ENCODE measurements at regions of chr6 and their contacts with region 1.

Region 1: GRCh38 chr6:99868074-99868702 is 125.8 kb downstream of the MCHR2 start:
- DNase-seq: peak; percentile 2
- ATAC-seq: peak; percentile 90
- H3K4me3 ChIP-seq: no peak overlapping the region
- H3K27ac ChIP-seq: no peak overlapping the region
- H3K4me1 ChIP-seq: no peaks in the 10 kb centered on the region
- H3K27me3 ChIP-seq: no peaks in the 10 kb centered on the region; a peak in 2 of 4 replicates
- CTCF ChIP-seq: peak; percentile 67 to 85 (median 75); a peak in 5 of 6 replicates
- EP300 ChIP-seq: no peak
- POLR2A ChIP-seq: no peak
- RAD21 ChIP-seq: peak; percentile 71

Region 2: DNA sequence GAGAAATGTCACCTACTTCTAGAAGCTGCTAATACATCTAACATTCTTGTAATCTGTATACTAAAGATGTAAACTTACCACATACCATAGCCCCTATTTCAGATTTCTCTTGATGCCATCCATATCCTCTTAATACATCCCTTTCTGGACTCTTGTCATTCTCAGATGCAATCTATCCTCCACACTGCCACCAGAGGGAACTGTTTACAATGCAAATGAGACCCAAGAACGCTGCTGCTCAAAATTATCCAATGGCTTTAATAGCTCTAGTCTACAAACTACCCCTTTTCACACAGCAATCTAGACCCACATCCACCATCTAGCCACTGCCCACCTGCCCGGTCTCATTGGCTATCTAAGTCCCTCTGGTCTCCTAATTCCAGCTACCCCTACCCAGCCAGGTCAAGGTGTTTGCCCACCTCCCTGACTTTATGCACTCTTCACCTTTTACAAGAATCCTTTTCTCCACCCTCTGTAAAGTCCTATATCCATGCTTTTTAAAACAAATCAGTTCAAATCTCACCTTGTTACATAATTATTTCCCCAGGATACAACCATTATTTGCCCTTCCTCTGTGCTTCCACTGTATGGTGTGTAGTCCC is 533.6 kb before region 1 on chr6:
- CTCF ChIA-PET with region 1: no interaction called
- POLR2A ChIA-PET with region 1: no interaction called
- RAD21 ChIA-PET with region 1: no interaction called
- SMC1A ChIA-PET with region 1: no interaction called
- in situ Hi-C with region 1: no loop called
- intact Hi-C with region 1: no loop called
- DNase-seq: peak; percentile 21
- ATAC-seq: peak; percentile 65
- H3K4me3 ChIP-seq: no peak overlapping the region
- H3K27ac ChIP-seq: no peak overlapping the region
- H3K4me1 ChIP-seq: peaks cover 16% of the 10 kb centered on the region
- H3K27me3 ChIP-seq: no peaks in the 10 kb centered on the region; a peak in 1 of 4 replicates
- CTCF ChIP-seq: peak; percentile 67 to 74 (median 69)
- EP300 ChIP-seq: no peak
- POLR2A ChIP-seq: no peak
- RAD21 ChIP-seq: peak; percentile 80

Region 3: GRCh38 chr6:99761711-99762110 is 106.5 kb before region 1 on chr6:
- CTCF ChIA-PET with region 1: no interaction called
- POLR2A ChIA-PET with region 1: no interaction called
- RAD21 ChIA-PET with region 1: no interaction called
- SMC1A ChIA-PET with region 1: no interaction called
- in situ Hi-C with region 1: no loop called
- intact Hi-C with region 1: no loop called
- DNase-seq: no peak
- ATAC-seq: no peak
- H3K4me3 ChIP-seq: no peak overlapping the region
- H3K27ac ChIP-seq: no peak overlapping the region
- H3K4me1 ChIP-seq: no peaks in the 10 kb centered on the region
- H3K27me3 ChIP-seq: no peaks in the 10 kb centered on the region
- CTCF ChIP-seq: no peak
- EP300 ChIP-seq: no peak
- POLR2A ChIP-seq: no peak
- RAD21 ChIP-seq: no peak

Region 4: DNA sequence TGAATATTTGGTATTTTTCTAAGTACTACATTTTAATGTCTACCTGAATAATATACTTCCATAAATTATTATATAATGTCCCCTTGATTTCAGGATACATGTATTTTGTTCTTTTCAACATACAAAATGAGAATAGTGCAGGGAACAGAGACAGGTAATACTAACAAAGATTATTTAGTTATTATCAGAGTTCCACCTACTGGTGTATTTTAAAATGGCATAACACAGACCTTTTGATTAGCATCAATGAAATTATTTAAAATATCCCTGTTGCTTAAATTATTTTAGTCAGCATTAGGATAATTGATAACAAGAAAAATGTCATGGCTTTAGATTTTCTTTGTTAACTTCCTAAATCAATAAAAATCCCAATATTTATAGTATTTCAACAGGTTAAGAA is 77.5 kb before region 1 on chr6:
- CTCF ChIA-PET with region 1: no interaction called
- POLR2A ChIA-PET with region 1: no interaction called
- RAD21 ChIA-PET with region 1: no interaction called
- SMC1A ChIA-PET with region 1: no interaction called
- in situ Hi-C with region 1: no loop called
- intact Hi-C with region 1: no loop called
- DNase-seq: no peak
- ATAC-seq: 0 out of 3 replicates have a peak, but pooled peaks have one; percentile 39
- H3K4me3 ChIP-seq: no peak overlapping the region
- H3K27ac ChIP-seq: no peak overlapping the region
- H3K4me1 ChIP-seq: no peaks in the 10 kb centered on the region
- H3K27me3 ChIP-seq: peaks cover 0 to 3% of the 10 kb centered on the region in 2 experiments; a peak in 1 of 4 replicates
- CTCF ChIP-seq: no peak; a peak in 1 of 6 replicates
- EP300 ChIP-seq: no peak
- POLR2A ChIP-seq: no peak
- RAD21 ChIP-seq: no peak

Region 5: DNA sequence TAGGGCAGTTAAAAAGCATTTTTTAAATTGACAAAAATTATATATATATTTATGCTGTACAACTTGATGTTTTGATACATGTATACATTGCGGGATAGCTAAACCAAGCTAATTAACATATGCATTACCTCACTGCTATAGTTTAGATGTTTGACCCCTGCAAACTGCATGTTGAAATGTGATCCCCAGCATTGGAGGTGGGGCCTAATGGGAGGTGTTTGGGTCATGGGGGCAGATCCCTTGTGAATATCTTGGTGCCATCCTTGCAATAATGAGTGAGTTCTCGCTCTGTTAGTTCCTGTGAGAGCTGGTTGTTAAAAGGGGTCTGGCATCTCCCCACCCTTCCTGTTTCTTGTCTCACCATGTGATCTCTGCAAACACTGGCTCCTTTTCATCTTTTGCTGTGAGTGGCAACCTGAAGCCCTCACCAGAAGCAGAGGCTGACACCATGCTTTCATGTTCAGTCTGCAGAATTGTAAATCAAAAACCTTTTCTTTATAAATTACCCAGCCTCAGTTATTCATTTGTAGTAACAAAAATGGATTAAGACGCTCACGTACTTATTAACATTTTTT is 14.0 kb after region 1 on chr6:
- CTCF ChIA-PET with region 1: interaction called, 40 read pairs
- POLR2A ChIA-PET with region 1: no interaction called
- RAD21 ChIA-PET with region 1: interaction called, 5 read pairs
- SMC1A ChIA-PET with region 1: no interaction called
- in situ Hi-C with region 1: no loop called
- intact Hi-C with region 1: no loop called
- DNase-seq: no peak
- ATAC-seq: no peak
- H3K4me3 ChIP-seq: no peak overlapping the region
- H3K27ac ChIP-seq: no peak overlapping the region
- H3K4me1 ChIP-seq: no peaks in the 10 kb centered on the region
- H3K27me3 ChIP-seq: no peaks in the 10 kb centered on the region; a peak in 1 of 4 replicates
- CTCF ChIP-seq: no peak
- EP300 ChIP-seq: no peak
- POLR2A ChIP-seq: no peak
- RAD21 ChIP-seq: no peak

Region 6: DNA sequence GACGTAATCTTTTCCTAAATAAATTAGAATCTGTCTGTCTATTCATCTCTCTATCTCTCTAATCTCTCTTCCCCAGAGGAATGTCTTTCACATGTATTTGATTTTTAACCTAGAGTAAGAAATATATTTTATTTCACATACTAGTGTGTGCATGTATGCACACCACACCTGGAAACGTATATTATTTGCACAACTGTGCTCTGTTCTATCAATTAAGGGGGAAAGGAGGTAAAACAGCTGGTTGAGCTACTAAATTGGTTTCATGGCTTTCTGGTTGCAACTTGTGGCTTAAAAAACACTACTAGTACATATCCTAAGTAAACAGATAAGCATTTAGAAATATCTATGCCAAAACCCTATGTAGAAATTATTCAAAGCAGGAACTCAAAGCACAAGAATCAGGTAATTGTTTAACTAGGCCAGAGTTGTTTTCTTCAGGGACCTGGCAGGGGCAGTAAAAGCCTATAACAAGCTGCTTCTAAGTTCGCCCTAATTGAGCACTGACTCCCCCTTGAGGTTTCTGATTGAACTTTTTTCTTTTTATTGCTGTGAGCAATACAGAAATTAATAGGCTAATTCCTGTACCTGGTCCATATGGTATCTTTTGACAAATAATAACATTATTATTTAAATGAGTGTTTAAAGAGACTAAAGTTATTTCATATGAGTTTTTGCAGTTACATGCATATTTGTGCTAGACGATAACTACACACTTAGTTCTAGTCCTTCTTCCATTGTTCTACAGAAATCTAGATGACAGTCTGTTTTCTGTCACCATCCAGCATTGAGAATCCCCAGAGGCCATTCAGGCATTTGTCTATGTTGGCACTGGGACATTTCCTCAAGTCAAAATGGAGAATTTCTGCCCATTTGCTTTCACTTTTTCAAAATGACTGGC is 37.3 kb after region 1 on chr6:
- CTCF ChIA-PET with region 1: interaction called, 41 read pairs
- POLR2A ChIA-PET with region 1: no interaction called
- RAD21 ChIA-PET with region 1: interaction called, 5 read pairs
- SMC1A ChIA-PET with region 1: interaction called, 10 read pairs
- in situ Hi-C with region 1: no loop called
- intact Hi-C with region 1: loop called (anchors 1 kb)
- DNase-seq: no peak
- ATAC-seq: peak; percentile 92
- H3K4me3 ChIP-seq: no peak overlapping the region
- H3K27ac ChIP-seq: no peak overlapping the region
- H3K4me1 ChIP-seq: no peaks in the 10 kb centered on the region
- H3K27me3 ChIP-seq: no peaks in the 10 kb centered on the region; a peak in 1 of 4 replicates
- CTCF ChIP-seq: peak; percentile 49 to 65 (median 53); a peak in 5 of 6 replicates
- EP300 ChIP-seq: no peak
- POLR2A ChIP-seq: no peak
- RAD21 ChIP-seq: peak; percentile 50

Region 7: DNA sequence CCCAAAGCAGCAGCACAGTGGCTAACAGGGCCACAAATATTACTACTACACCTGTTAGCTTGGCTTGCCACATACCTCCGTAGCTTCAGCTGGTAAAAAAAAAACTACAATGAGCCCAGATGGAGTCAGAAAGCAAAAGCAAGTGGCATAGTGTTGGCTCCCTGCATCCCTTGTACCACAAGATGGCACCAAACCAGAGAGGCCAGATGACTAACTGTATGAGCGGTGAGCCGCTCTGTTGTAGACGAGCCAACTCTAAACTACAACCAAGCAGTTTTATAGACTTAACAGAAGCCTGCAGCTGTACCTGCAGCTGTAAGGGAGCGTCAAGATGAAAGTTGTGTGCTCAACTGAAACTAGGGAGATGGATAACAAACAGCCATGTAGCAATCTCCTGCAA is 210.3 kb after region 1 on chr6:
- CTCF ChIA-PET with region 1: interaction called, 12 read pairs
- POLR2A ChIA-PET with region 1: no interaction called
- RAD21 ChIA-PET with region 1: no interaction called
- SMC1A ChIA-PET with region 1: no interaction called
- in situ Hi-C with region 1: no loop called
- intact Hi-C with region 1: no loop called
- DNase-seq: no peak
- ATAC-seq: peak; percentile 76
- H3K4me3 ChIP-seq: no peak overlapping the region
- H3K27ac ChIP-seq: no peak overlapping the region
- H3K4me1 ChIP-seq: no peaks in the 10 kb centered on the region
- H3K27me3 ChIP-seq: no peaks in the 10 kb centered on the region
- CTCF ChIP-seq: 0 out of 6 replicates have a peak, but pooled peaks of 1 of the 3 experiments have one; percentile 22
- EP300 ChIP-seq: no peak
- POLR2A ChIP-seq: no peak
- RAD21 ChIP-seq: no peak

Region 8: GRCh38 chr6:100185615-100186014 is 317.4 kb after region 1 on chr6:
- CTCF ChIA-PET with region 1: no interaction called
- POLR2A ChIA-PET with region 1: no interaction called
- RAD21 ChIA-PET with region 1: no interaction called
- SMC1A ChIA-PET with region 1: no interaction called
- in situ Hi-C with region 1: no loop called
- intact Hi-C with region 1: no loop called
- DNase-seq: no peak
- ATAC-seq: peak; percentile 88
- H3K4me3 ChIP-seq: no peak overlapping the region
- H3K27ac ChIP-seq: no peak overlapping the region
- H3K4me1 ChIP-seq: 0 out of 2 replicates have a peak, but pooled peaks cover 2% of the 10 kb centered on the region
- H3K27me3 ChIP-seq: no peaks in the 10 kb centered on the region; a peak in 1 of 4 replicates
- CTCF ChIP-seq: no peak
- EP300 ChIP-seq: no peak; a peak in 1 of 4 replicates
- POLR2A ChIP-seq: no peak
- RAD21 ChIP-seq: no peak

Region 9: DNA sequence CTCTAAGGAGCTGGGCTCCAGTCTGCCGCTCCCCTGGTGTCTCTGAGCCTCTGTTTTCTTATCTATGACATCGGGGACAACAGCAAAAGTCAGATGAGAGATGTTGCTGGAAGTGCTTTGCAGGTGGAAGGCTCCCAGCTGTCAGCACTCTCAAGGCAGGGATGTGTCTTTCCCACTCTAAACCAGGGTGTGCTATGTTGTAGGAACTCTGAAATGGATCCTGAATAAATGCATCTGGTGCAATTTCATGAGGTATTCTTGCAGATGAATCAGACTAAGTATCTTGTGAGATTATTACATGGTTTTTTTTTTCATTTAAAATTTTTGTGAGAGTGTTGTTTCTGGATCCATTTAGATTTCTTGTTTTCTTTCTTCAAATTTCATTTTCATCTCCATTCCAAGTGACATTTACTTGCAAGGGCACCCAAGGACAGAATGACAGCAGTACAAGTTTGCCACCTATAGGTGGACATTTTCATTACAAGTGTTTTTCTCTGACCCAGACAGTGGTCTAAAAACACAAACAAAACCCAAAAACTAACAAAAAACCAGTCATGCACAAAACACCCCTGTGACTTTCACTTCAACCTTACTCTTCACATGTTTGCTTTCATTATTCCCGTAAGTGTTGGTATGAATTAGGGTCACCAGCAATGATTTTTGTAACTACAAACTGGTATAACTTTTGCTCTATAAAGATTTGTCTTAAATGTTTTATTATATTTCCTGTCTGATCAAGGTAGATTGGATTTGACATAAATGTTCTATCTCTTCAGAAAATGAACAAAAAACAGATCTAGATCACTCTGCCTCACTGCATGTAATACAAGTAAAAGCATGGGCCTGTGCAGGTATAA is 611.2 kb after region 1 on chr6:
- CTCF ChIA-PET with region 1: interaction called, 4 read pairs
- POLR2A ChIA-PET with region 1: no interaction called
- RAD21 ChIA-PET with region 1: no interaction called
- SMC1A ChIA-PET with region 1: no interaction called
- in situ Hi-C with region 1: no loop called
- intact Hi-C with region 1: loop called (anchors 5 kb)
- DNase-seq: peak; percentile 34
- ATAC-seq: peak; percentile 73
- H3K4me3 ChIP-seq: no peak overlapping the region
- H3K27ac ChIP-seq: no peak overlapping the region
- H3K4me1 ChIP-seq: peaks cover 7% of the 10 kb centered on the region
- H3K27me3 ChIP-seq: no peaks in the 10 kb centered on the region
- CTCF ChIP-seq: peak; percentile 63 to 80 (median 76)
- EP300 ChIP-seq: no peak
- POLR2A ChIP-seq: no peak
- RAD21 ChIP-seq: peak; percentile 95

Measured in GM12878 (cell line).